ENCODE measurements at regions of chr1 and their contacts with region 1.

Region 1: GRCh38 chr1:90579212-90579802 is 137.8 kb downstream of the BARHL2 start:
- DNase-seq: no peak
- ATAC-seq: peak; percentile 85
- H3K4me3 ChIP-seq: no peak overlapping the region
- H3K27ac ChIP-seq: no peak overlapping the region
- H3K4me1 ChIP-seq: no peaks in the 10 kb centered on the region
- H3K27me3 ChIP-seq: no peaks in the 10 kb centered on the region
- CTCF ChIP-seq: peak; percentile 46 to 66 (median 52); a peak in 5 of 6 replicates
- EP300 ChIP-seq: no peak
- POLR2A ChIP-seq: no peak
- RAD21 ChIP-seq: peak; percentile 57

Region 2: GRCh38 chr1:90127288-90127953 is 451.9 kb before region 1 on chr1:
- CTCF ChIA-PET with region 1: interaction called, 26 read pairs
- POLR2A ChIA-PET with region 1: no interaction called
- RAD21 ChIA-PET with region 1: interaction called, 4 read pairs
- SMC1A ChIA-PET with region 1: interaction called, 7 read pairs
- in situ Hi-C with region 1: no loop called
- intact Hi-C with region 1: loop called (anchors 10 kb)
- DNase-seq: peak; percentile 9
- ATAC-seq: peak; percentile 89
- H3K4me3 ChIP-seq: no peak overlapping the region
- H3K27ac ChIP-seq: no peak overlapping the region
- H3K4me1 ChIP-seq: no peaks in the 10 kb centered on the region
- H3K27me3 ChIP-seq: no peaks in the 10 kb centered on the region; a peak in 1 of 4 replicates
- CTCF ChIP-seq: no peak
- EP300 ChIP-seq: peak; percentile 47 to 60; a peak in 1 of 4 replicates
- POLR2A ChIP-seq: no peak
- RAD21 ChIP-seq: no peak

Region 3: DNA sequence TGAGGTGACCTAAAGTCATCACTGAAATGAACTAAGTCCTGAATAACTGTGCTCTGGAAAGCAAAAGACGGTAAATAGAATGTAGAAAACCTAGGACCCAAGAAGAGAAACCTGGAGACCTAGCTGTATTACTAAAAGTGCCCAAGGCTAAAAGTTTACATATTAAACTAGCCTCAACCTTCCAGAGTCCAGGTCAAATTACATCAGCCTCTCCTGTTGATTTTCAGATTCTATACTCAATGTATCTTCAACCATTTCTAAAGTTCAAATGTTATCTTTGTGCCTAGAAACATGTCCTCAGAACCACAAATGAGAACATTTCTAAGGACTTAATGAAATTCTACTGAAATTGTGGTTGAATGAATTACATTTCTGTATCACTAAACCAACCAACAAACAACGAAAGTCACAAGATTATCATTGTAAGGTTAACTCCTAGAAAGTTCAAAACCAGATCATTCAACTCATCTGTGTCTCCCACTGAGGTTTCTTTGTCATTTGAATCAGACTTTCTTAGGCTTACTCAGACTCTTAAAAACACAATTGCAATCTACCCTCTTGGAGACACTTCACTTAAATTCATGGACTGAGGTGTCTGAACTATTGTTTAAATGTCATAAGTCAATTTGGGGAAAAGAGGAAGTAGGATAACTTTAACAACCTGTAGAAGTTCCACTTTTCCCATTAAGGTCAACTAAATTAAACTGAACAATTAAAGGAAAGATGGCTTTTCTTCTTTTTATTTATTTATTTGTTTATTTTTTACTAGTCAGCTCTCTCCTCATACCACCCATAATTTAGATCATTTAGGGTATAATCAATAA is 69.9 kb before region 1 on chr1:
- CTCF ChIA-PET with region 1: interaction called, 4 read pairs
- POLR2A ChIA-PET with region 1: no interaction called
- RAD21 ChIA-PET with region 1: interaction called, 3 read pairs
- SMC1A ChIA-PET with region 1: interaction called, 4 read pairs
- in situ Hi-C with region 1: no loop called
- intact Hi-C with region 1: loop called (anchors 5 kb)
- DNase-seq: peak; percentile 34
- ATAC-seq: peak; percentile 80
- H3K4me3 ChIP-seq: no peak overlapping the region
- H3K27ac ChIP-seq: no peak overlapping the region
- H3K4me1 ChIP-seq: no peaks in the 10 kb centered on the region
- H3K27me3 ChIP-seq: no peaks in the 10 kb centered on the region
- CTCF ChIP-seq: no peak
- EP300 ChIP-seq: peak; percentile 28 to 62; a peak in 2 of 4 replicates
- POLR2A ChIP-seq: no peak
- RAD21 ChIP-seq: no peak

Region 4: DNA sequence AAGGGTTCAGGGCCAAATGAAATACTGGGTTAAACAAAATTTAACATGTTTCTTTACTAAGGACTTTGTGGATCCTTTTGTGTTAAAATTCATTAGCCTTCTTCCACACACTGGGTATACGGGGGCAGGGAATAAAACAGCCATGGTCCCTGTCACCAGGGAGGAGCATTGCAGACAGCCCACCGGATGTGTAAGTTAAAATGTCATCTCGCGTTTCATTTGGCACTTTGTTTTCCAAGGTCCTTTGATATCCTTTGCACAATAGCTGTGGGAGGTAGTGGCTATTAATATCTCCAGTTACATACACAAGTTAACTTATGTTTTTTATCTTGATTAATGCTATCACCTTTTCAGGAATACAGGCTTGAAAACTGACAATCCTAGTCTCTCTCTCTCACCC is 35.0 kb before region 1 on chr1:
- CTCF ChIA-PET with region 1: interaction called, 13 read pairs
- POLR2A ChIA-PET with region 1: no interaction called
- RAD21 ChIA-PET with region 1: interaction called, 3 read pairs
- SMC1A ChIA-PET with region 1: interaction called, 6 read pairs
- in situ Hi-C with region 1: no loop called
- intact Hi-C with region 1: no loop called
- DNase-seq: no peak
- ATAC-seq: no peak
- H3K4me3 ChIP-seq: no peak overlapping the region
- H3K27ac ChIP-seq: no peak overlapping the region
- H3K4me1 ChIP-seq: no peaks in the 10 kb centered on the region
- H3K27me3 ChIP-seq: no peaks in the 10 kb centered on the region
- CTCF ChIP-seq: no peak
- EP300 ChIP-seq: no peak
- POLR2A ChIP-seq: no peak
- RAD21 ChIP-seq: no peak

Region 5: GRCh38 chr1:90568436-90568835 is 10.9 kb before region 1 on chr1:
- CTCF ChIA-PET with region 1: interaction called, 67 read pairs
- POLR2A ChIA-PET with region 1: interaction called, 4 read pairs
- RAD21 ChIA-PET with region 1: interaction called, 8 read pairs
- SMC1A ChIA-PET with region 1: interaction called, 10 read pairs
- in situ Hi-C with region 1: no loop called
- intact Hi-C with region 1: no loop called
- DNase-seq: no peak
- ATAC-seq: no peak
- H3K4me3 ChIP-seq: no peak overlapping the region
- H3K27ac ChIP-seq: no peak overlapping the region
- H3K4me1 ChIP-seq: no peaks in the 10 kb centered on the region
- H3K27me3 ChIP-seq: no peaks in the 10 kb centered on the region
- CTCF ChIP-seq: no peak
- EP300 ChIP-seq: no peak
- POLR2A ChIP-seq: no peak
- RAD21 ChIP-seq: no peak

Region 6: DNA sequence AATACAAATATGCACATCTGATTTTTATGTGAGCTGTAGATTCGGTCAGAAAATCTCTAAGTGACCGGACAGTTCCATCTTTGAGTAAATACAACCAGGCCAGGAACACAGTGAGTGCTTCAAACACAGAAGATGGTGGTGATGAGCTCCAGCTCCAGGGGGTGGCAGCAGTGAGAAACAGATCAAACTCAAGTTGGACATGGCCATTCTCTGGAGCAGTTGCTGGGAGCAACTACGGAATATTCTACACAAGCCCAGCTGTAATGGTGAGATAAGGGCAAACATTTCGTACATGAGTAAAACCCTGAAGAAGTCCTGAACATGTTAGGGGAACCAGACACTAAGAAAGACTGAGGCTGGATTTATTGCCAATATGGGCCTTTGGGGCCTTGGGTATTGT is 37.1 kb after region 1 on chr1:
- CTCF ChIA-PET with region 1: interaction called, 21 read pairs
- POLR2A ChIA-PET with region 1: no interaction called
- RAD21 ChIA-PET with region 1: no interaction called
- SMC1A ChIA-PET with region 1: interaction called, 6 read pairs
- in situ Hi-C with region 1: no loop called
- intact Hi-C with region 1: no loop called
- DNase-seq: no peak
- ATAC-seq: peak; percentile 59
- H3K4me3 ChIP-seq: no peak overlapping the region
- H3K27ac ChIP-seq: no peak overlapping the region
- H3K4me1 ChIP-seq: no peaks in the 10 kb centered on the region
- H3K27me3 ChIP-seq: no peaks in the 10 kb centered on the region
- CTCF ChIP-seq: peak; percentile 11 to 30 (median 20); a peak in 2 of 6 replicates
- EP300 ChIP-seq: no peak
- POLR2A ChIP-seq: no peak
- RAD21 ChIP-seq: peak; percentile 22; the same call in 1 of the 2 replicates

Region 7: GRCh38 chr1:90671741-90672140 is 92.4 kb after region 1 on chr1:
- CTCF ChIA-PET with region 1: no interaction called
- POLR2A ChIA-PET with region 1: no interaction called
- RAD21 ChIA-PET with region 1: no interaction called
- SMC1A ChIA-PET with region 1: no interaction called
- in situ Hi-C with region 1: no loop called
- intact Hi-C with region 1: no loop called
- DNase-seq: no peak
- ATAC-seq: no peak
- H3K4me3 ChIP-seq: no peak overlapping the region
- H3K27ac ChIP-seq: no peak overlapping the region
- H3K4me1 ChIP-seq: no peaks in the 10 kb centered on the region
- H3K27me3 ChIP-seq: no peaks in the 10 kb centered on the region
- CTCF ChIP-seq: no peak
- EP300 ChIP-seq: no peak
- POLR2A ChIP-seq: no peak
- RAD21 ChIP-seq: no peak